ENCODE measurements at regions of chr7 and their contacts with region 1.

Region 1: DNA sequence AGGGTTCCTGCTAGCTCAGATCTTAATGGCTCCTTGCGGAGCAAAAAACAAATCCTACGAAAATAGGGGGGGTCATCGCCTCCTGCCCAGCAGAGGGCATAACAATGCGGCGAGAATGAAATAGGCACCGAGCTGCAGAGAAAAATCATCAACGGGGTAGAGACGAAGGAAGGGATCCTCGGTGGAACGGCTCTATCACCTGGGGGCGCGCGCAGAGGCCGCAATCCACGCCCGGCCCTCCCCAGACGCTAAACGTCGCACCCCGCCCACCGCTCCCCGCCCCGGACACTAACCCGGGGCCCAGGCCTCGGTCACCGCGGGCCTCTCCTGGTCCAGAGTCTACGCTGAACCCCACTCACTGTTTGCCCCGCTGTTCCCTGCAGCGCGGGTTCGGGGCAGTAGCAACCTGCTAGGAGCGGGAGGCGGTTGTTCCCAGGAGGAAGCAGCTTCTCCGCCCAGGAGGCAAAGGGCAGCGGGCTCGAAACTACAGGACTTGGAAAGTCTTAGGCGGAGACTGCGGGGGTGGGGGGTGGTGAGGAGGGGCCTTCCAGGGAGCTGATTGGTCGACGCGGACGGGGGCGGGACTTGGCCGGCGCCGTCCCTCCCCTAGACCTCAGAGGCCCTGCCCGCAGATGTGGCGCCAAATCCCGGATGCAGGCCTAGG is at the start of gene TCAF1:
- DNase-seq: peak; percentile 99

Region 2: DNA sequence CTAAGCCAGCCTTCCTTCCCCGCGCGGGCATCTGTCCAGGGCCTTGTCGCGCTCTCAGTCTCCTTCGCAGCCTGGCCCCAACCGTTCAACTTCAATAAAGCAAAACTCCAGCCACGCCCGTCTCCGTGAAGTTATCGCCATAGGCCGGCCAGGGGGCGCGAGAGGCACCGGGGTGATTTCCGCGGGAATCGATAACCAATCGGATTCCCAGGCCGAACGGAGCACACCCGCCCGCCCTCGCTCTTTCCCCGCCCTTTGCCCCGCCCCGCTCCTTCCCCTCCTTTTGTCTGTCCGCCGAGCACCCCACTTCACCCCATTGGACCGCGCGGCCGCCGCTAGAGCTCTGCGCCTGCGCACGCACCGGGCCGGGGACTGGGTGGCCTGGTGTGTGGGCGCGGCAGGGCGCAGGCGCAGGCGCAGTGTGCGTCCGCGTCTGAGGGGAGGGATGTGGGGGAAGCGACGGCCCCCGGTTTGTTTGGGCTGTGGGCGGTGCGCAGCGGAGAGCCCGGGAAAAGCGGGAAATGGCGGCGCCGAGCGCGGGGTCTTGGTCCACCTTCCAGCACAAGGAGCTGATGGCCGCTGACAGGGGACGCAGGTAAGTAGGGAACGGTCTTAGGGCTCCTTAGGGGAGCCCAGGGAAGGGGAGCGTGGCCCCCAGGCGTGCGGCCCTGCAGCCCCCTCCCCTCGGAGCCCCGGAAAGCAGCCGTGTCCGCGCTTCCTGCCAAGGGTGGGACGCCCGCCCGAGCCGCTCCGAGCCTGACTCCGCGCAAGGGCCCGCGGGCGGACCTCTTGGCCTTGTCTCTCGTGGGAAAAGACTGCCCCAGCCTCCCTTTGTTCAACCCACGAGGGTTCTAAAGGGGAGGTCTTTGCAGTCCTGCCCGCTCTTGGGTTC is 613.6 kb before region 1 on chr7 and contains the start of gene CASP2:
- CTCF ChIA-PET with region 1: no interaction called
- POLR2A ChIA-PET with region 1: no interaction called
- DNase-seq: peak; percentile 100

Region 3: GRCh38 chr7:143846692-143847091 is 55.1 kb before region 1 on chr7:
- CTCF ChIA-PET with region 1: no interaction called
- POLR2A ChIA-PET with region 1: no interaction called
- DNase-seq: no peak

Region 4: GRCh38 chr7:143884969-143885559 is 16.7 kb before region 1 on chr7:
- CTCF ChIA-PET with region 1: interaction called, 11 read pairs
- POLR2A ChIA-PET with region 1: interaction called, 60 read pairs
- DNase-seq: no peak